CD4-positive, alpha-beta T cell (primary cell): ENCODE measurements at regions of chr20 and their contacts with region 1.

Region 1: DNA sequence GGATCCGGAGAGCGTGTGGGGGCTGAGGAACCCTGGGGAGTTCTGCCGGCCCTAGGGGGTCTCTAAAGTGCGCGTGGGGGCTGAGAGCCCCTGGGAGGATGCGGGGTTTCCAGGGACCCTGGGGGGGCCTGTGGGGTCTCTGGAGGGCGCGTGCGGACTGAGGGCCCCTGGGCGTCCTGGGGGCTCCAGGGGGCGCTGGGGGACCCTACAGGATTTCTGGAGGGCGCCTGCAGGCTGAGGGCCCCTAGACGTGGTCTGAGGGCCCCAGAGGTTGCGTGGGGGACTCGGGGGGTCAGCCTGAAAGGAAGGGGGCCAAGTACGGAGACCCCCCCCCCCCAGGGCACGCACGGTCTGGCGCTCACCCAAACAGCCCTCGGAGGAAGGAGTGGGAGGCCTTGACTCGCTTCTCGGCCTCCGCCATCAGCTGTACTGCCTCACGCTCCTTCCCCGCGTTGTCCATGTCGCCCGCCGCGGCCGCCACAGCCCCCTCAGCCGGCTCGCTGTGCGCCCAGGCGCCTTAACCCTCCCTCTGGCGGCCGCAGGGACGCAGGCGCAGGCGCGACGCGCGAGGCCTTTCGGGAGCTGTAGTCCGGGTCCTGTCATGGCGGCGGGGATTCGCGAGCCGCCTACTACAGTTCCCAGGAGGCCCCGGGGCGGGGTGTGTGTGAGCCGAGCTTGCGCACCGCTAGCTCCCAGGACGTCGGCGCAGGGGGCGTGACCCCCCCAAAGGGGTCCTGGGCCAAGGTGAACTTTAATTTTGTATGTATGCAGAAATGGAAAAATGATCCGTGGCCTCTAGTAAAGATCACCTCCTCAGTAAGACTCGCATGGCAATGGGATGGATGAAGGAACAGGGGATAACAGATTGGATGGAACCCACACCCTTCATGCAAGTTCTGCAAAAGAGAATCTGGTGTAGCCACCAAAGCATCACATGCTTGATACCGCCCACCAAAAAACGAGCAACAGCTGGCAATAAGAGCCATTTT is at the start of gene NAPB:
- DNase-seq: peak; percentile 86 to 95 (median 92)
- ATAC-seq: peak; percentile 99
- H3K4me3 ChIP-seq: peak within 1 kb of the TSS; percentile 97
- H3K4me3 Mint-ChIP-seq: peak within 1 kb of the TSS; percentile 93
- H3K27ac ChIP-seq: peak within 1 kb of the TSS; percentile 36 to 49
- H3K27ac Mint-ChIP-seq: peak within 1 kb of the TSS; percentile 85
- H3K4me1 ChIP-seq: peaks cover 14% of the 10 kb centered on the region
- H3K4me1 Mint-ChIP-seq: peaks cover 40% of the 10 kb centered on the region
- H3K27me3 ChIP-seq: no peaks in the 10 kb centered on the region
- H3K27me3 Mint-ChIP-seq: peaks cover 14% of the 10 kb centered on the region
- CTCF ChIP-seq: peak; percentile 48
- total RNA-seq, gene NAPB: 7.5 to 8.9 TPM

Region 2: DNA sequence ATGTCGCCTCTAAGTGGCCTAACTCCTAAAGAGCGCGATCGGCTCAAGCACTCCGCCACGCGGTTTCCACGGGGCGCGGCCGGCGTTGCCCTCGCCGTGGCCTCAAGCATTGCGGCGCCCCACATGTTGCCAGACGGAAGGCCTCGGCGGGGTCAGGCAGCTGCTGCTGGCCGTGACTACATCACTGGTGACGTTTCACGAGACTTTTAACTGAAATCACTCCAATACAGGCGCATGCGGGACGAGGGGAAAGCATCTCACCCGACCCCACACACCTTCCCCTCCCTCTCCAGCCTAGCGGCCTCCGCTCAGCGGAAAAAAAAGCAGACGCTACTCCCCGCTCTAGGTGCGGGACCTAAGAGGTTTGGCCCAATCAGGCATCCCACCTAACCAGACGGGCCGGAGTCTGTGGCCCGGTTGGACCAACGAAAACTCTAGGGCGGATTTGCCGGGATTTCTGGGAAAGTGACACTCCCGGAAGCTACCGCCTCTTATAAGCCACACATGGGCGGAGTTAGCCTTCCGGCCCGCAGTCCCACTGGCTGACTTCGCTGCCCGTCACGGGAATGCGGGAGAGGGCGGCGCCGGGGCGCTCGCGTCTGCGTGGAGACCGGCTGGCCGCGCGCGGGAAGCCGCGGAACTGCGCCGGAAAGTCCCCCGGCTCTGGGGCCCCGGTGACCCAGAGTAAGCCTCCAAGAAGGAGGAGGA is 70.9 kb before region 1 on chr20 and contains the start of gene NXT1:
- CTCF ChIA-PET with region 1: interaction called, 18 read pairs
- POLR2A ChIA-PET with region 1: interaction called, 79 read pairs
- intact Hi-C with region 1: loop called in 1 of 2 experiments (anchors 1 kb)
- DNase-seq: peak; percentile 90 to 98 (median 94)
- ATAC-seq: peak; percentile 81
- H3K4me3 ChIP-seq: peak within 1 kb of the TSS; percentile 77
- H3K4me3 Mint-ChIP-seq: peak within 1 kb of the TSS; percentile 98
- H3K27ac ChIP-seq: peak within 1 kb of the TSS; percentile 99 to 100
- H3K27ac Mint-ChIP-seq: peak within 1 kb of the TSS; percentile 99
- H3K4me1 ChIP-seq: peaks cover 30% of the 10 kb centered on the region
- H3K4me1 Mint-ChIP-seq: peaks cover 30% of the 10 kb centered on the region
- H3K27me3 ChIP-seq: no peaks in the 10 kb centered on the region
- H3K27me3 Mint-ChIP-seq: no peaks in the 10 kb centered on the region
- CTCF ChIP-seq: no peak
- total RNA-seq, gene NXT1: 55.4 to 57.1 TPM

Region 3: GRCh38 chr20:23357767-23358591 is 63.3 kb before region 1 on chr20:
- CTCF ChIA-PET with region 1: interaction called, 7 read pairs
- POLR2A ChIA-PET with region 1: interaction called, 36 read pairs
- intact Hi-C with region 1: loop called in 1 of 2 experiments (anchors 5 kb)
- DNase-seq: peak; percentile 98 to 100 (median 100)
- ATAC-seq: peak; percentile 69
- H3K4me3 ChIP-seq: peak overlapping the region; percentile 93
- H3K4me3 Mint-ChIP-seq: peak overlapping the region; percentile 88
- H3K27ac ChIP-seq: peak overlapping the region; percentile 91 to 95
- H3K27ac Mint-ChIP-seq: peak overlapping the region; percentile 99
- H3K4me1 ChIP-seq: peaks cover 28% of the 10 kb centered on the region
- H3K4me1 Mint-ChIP-seq: peaks cover 35% of the 10 kb centered on the region
- H3K27me3 ChIP-seq: no peaks in the 10 kb centered on the region
- H3K27me3 Mint-ChIP-seq: no peaks in the 10 kb centered on the region
- CTCF ChIP-seq: no peak

Region 4: DNA sequence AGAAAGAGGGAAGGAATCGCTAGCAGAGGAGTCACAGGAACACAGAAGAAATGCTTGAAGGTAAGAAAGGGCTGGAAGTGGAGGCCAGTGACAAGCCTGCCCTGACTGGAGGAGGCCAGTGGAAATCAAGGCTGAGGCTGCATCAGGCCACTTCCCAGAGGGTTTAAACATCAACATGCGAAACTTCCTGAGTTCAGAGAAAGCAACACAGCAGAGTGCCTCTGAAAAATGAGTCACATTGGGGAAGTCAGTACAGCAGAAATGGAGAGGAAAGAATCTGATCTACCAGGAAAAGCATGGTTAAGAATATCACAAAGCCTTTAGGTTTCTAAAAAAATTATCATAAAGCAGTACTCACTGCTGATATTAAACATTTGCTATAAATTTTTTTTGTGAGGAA is 23.3 kb before region 1 on chr20:
- CTCF ChIA-PET with region 1: no interaction called
- POLR2A ChIA-PET with region 1: no interaction called
- intact Hi-C with region 1: loop called in 1 of 2 experiments (anchors 1 kb)
- DNase-seq: peak in 1 of 14 experiments; percentile 14
- ATAC-seq: no peak
- H3K4me3 ChIP-seq: no peak overlapping the region
- H3K4me3 Mint-ChIP-seq: no peak overlapping the region
- H3K27ac ChIP-seq: no peak overlapping the region
- H3K27ac Mint-ChIP-seq: no peak overlapping the region
- H3K4me1 ChIP-seq: peaks cover 5% of the 10 kb centered on the region
- H3K4me1 Mint-ChIP-seq: peaks cover 11% of the 10 kb centered on the region
- H3K27me3 ChIP-seq: no peaks in the 10 kb centered on the region
- H3K27me3 Mint-ChIP-seq: no peaks in the 10 kb centered on the region
- CTCF ChIP-seq: no peak

Region 5: DNA sequence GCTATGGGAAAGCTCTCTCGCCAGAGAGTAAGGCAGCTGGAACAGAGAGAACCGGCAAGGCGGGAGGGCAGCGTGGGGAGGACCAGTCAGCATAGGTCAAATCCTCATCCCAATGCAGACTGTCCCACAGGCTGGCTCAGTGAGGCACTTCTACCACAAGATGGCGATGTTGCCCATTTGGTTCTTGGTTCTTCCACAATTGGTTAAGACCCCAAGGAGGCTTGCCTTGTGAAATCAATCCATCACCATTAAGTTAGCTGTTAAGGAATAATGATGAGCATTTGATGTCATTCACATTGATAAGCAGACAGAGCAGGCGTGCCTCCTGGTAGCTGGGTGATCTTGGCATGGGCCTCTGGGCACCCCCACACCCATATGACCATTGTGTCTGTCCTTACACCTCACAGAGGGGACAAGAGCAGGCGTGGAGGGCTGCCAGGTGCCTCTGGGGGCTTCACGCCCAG is 20.6 kb after region 1 on chr20:
- CTCF ChIA-PET with region 1: no interaction called
- POLR2A ChIA-PET with region 1: no interaction called
- intact Hi-C with region 1: no loop called
- DNase-seq: peak; percentile 17 to 74 (median 40)
- ATAC-seq: peak; percentile 51
- H3K4me3 ChIP-seq: no peak overlapping the region
- H3K4me3 Mint-ChIP-seq: no peak overlapping the region
- H3K27ac ChIP-seq: no peak overlapping the region
- H3K27ac Mint-ChIP-seq: no peak overlapping the region
- H3K4me1 ChIP-seq: no peaks in the 10 kb centered on the region
- H3K4me1 Mint-ChIP-seq: no peaks in the 10 kb centered on the region
- H3K27me3 ChIP-seq: no peaks in the 10 kb centered on the region
- H3K27me3 Mint-ChIP-seq: no peaks in the 10 kb centered on the region
- CTCF ChIP-seq: peak; percentile 78